T-cell (primary cell): ENCODE measurements at regions of chr20 and their contacts with region 1.

Region 1: DNA sequence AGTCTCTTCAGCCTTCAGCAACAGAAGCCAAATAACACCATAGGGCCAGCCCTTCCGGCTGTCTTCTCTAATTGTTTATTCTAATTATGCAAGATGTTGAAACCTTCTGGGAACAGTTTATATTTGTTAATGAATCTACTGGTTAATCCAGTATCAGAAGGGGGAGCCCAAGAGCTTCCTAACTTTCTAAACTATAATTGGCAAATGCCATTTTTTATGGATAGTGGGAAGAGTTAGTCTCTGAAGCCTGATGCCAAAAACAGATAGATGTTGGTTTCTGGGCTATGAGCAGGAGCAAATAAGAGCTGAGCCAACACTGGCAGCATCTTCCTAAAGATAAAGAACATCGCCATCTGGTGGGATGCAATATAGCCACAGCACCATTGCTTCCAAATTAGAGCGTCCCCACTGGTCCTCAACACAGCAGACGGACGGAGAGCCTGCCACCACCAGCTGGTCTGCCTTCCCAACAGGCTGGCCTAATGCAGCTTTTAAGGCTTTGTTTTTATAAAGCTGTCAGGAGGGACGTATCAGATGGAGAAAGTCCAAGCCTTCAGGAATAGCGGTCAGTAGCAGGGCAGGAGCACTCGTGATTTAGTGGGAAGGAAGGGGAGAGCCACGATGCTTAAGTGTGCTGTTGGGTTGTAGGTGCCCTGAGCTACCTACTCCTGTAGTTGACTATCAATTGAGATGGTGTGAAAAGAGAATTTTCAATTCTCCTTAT is 118.8 kb downstream of the RALGAPA2 start:
- DNase-seq: peak in 1 of 35 experiments; percentile 21
- ATAC-seq: no peak
- H3K4me3 ChIP-seq: no peak overlapping the region
- H3K4me3 Mint-ChIP-seq: no peak overlapping the region
- H3K27ac ChIP-seq: no peak overlapping the region
- H3K27ac Mint-ChIP-seq: no peak overlapping the region
- H3K4me1 ChIP-seq: no peaks in the 10 kb centered on the region
- H3K4me1 Mint-ChIP-seq: no peaks in the 10 kb centered on the region
- H3K27me3 ChIP-seq: no peaks in the 10 kb centered on the region
- H3K27me3 Mint-ChIP-seq: no peaks in the 10 kb centered on the region

Region 2: DNA sequence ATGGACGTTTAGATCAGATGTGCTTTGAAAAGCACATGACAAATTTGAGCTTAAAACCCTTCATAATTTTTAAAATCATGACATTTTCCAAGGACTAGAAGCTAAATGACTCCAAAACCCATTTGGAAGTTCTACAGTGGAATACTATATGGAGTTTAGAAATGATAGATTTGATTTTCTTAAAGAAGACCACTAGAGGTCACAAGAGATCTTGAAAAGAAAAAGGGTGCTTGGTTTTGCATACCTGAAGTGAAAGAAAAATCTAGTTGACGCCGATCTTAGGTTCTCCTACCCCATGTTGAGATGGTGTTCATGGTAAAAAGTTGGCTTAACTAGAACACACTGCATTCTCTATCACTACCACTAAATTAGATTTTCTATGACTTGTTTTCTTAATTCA is 509.8 kb before region 1 on chr20:
- CTCF ChIA-PET with region 1: interaction called in 1 of 2 experiments, 11 read pairs
- POLR2A ChIA-PET with region 1: no interaction called
- DNase-seq: peak in 1 of 35 experiments; percentile 55
- ATAC-seq: peak in 3 of 4 experiments; percentile 50 to 69 (median 60)
- H3K4me3 ChIP-seq: no peak overlapping the region
- H3K4me3 Mint-ChIP-seq: peak overlapping the region in 2 of 3 donors; percentile 64 to 77
- H3K27ac ChIP-seq: no peak overlapping the region
- H3K27ac Mint-ChIP-seq: peak overlapping the region; percentile 45 to 84
- H3K4me1 ChIP-seq: peaks cover 0 to 5% of the 10 kb centered on the region in 2 experiments
- H3K4me1 Mint-ChIP-seq: peaks cover 6 to 12% (median 8%) of the 10 kb centered on the region in 3 donors
- H3K27me3 ChIP-seq: peaks cover under 1 to 3% of the 10 kb centered on the region in 2 experiments
- H3K27me3 Mint-ChIP-seq: peaks cover 9 to 19% of the 10 kb centered on the region in 2 donors

Region 3: DNA sequence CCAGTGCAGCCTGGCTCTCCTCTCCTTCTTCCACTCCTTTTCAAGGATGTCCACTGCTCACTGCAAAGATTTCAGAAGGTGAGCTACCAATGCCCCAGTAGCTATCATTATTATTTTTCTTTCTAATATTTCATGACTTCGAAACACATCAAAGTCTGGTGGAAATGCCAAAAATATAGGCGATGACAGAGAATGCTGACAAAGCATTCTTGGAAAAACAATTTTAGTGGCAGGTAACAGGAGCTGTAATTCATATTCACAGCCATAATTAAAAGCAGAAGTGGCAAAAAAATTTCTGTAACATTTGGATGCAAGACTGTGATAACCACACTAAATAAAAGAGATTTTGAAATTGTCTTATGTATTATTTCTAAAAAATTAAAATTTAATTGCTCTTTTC is 14.8 kb before region 1 on chr20:
- CTCF ChIA-PET with region 1: interaction called in 1 of 2 experiments, 4 read pairs
- POLR2A ChIA-PET with region 1: interaction called in 1 of 2 experiments, 17 read pairs
- DNase-seq: no peak
- ATAC-seq: no peak
- H3K4me3 ChIP-seq: no peak overlapping the region
- H3K4me3 Mint-ChIP-seq: no peak overlapping the region
- H3K27ac ChIP-seq: no peak overlapping the region
- H3K27ac Mint-ChIP-seq: no peak overlapping the region
- H3K4me1 ChIP-seq: no peaks in the 10 kb centered on the region
- H3K4me1 Mint-ChIP-seq: peaks cover 0 to 2% (median 0%) of the 10 kb centered on the region in 3 donors
- H3K27me3 ChIP-seq: no peaks in the 10 kb centered on the region
- H3K27me3 Mint-ChIP-seq: no peaks in the 10 kb centered on the region

Region 4: GRCh38 chr20:20624914-20625313 is 31.3 kb after region 1 on chr20:
- CTCF ChIA-PET with region 1: no interaction called
- POLR2A ChIA-PET with region 1: no interaction called
- DNase-seq: no peak
- ATAC-seq: no peak
- H3K4me3 ChIP-seq: no peak overlapping the region
- H3K4me3 Mint-ChIP-seq: no peak overlapping the region
- H3K27ac ChIP-seq: no peak overlapping the region
- H3K27ac Mint-ChIP-seq: no peak overlapping the region
- H3K4me1 ChIP-seq: no peaks in the 10 kb centered on the region
- H3K4me1 Mint-ChIP-seq: no peaks in the 10 kb centered on the region
- H3K27me3 ChIP-seq: no peaks in the 10 kb centered on the region
- H3K27me3 Mint-ChIP-seq: no peaks in the 10 kb centered on the region